ENCODE measurements at regions of chr19 and their contacts with region 1.

Region 1: DNA sequence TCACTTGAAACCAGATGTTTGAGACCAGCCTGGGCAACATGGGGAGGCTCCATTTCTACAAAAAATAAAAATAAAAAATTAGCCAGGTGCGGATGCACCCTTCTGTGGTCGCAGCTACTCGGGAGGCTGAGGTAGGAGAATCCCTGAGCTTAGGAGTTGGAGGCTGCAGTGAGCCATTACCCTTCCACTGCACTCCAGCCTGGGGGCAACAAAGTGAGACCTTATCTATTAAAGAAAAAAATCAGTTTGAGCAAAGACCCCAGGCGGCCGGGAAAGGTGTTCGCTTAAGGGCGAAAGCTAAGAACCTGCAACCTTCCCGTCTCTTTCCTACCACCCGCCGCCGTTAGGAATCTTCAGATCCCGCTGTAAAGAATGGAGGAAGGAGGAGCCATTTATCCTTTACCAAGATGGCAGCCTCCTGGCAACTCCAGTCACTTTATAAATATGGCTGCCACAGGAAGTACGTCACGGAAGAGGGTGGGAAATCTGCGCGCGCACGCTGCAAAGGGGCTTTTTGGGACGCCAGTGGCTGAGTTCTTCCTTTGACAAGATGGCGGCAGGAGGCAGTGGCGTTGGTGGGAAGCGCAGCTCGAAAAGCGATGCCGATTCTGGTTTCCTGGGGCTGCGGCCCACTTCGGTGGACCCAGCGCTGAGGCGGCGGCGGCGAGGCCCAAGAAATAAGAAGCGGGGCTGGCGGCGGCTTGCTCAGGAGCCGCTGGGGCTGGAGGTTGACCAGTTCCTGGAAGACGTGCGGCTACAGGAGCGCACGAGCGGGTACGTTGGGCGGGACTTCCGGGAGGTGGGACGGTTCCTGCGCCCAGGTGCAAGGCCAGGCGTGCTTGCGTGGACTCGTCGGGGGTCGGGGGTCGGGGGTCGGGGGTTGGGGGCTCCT is at the start of gene NOP53:
- DNase-seq: peak; percentile 98
- ATAC-seq: peak; percentile 71
- H3K4me3 Mint-ChIP-seq: peak within 1 kb of the TSS; percentile 98
- H3K27ac Mint-ChIP-seq: peak within 1 kb of the TSS; percentile 99
- H3K4me1 Mint-ChIP-seq: peaks cover 44% of the 10 kb centered on the region
- H3K27me3 Mint-ChIP-seq: no peaks in the 10 kb centered on the region
- total RNA-seq, gene NOP53: 317 to 374 TPM

Region 2: GRCh38 chr19:47436712-47437401 is 308.4 kb before region 1 on chr19:
- CTCF ChIA-PET with region 1: no interaction called
- POLR2A ChIA-PET with region 1: no interaction called
- intact Hi-C with region 1: loop called in 1 of 2 experiments (anchors 1 kb)
- DNase-seq: peak; percentile 92
- ATAC-seq: peak; percentile 91
- H3K4me3 Mint-ChIP-seq: no peak overlapping the region
- H3K27ac Mint-ChIP-seq: no peak overlapping the region
- H3K4me1 Mint-ChIP-seq: peaks cover 17% of the 10 kb centered on the region
- H3K27me3 Mint-ChIP-seq: peaks cover 38% of the 10 kb centered on the region

Region 3: DNA sequence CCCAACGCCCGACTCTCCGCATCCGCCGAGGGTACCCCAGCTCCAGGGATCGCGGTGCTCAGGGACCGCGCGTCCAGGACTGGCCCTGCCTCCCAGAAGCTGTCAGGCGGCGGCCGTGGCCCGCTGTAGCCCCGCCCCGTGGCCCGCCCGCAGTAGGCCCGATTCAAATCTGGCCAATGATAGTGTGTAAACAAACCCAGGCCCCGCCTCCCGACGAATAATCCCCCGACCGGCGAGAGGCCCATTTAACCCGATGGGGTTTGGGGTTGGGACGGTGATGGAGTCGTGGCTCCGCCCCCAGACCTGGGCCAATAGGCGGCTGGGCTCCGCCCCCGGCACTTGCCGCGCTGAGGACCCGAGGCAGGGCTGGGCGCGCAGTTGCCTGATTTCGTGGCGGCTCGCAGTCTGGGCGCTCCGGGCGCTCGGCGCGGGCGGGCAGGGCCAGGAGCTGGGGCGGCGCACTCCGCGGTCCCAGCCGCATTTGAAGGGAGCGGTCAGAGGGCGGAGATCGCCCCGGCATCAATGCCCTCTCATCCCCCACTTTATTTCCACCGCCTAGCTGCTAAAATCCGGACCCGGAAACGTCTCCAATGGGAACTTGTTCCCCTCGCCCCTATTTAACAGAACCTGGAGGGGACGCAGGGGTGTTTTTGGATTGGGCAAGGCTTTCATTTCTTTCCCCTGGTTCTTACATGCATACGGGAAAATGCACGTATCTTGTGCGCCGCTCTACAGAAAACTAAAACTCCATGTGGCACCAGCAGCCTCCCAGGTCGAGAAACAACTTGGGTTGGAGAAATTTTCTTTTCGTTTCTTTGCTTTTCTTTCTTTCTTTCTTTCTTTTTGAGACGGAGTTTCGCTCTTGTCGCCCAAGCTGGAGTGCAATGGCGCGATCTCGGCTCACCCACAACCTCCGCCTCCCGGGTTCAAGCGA is 144.7 kb before region 1 on chr19:
- CTCF ChIA-PET with region 1: no interaction called
- POLR2A ChIA-PET with region 1: no interaction called
- intact Hi-C with region 1: loop called in 1 of 2 experiments (anchors 1 kb)
- DNase-seq: peak; percentile 100
- ATAC-seq: peak; percentile 98
- H3K4me3 Mint-ChIP-seq: peak overlapping the region; percentile 79
- H3K27ac Mint-ChIP-seq: peak overlapping the region; percentile 89
- H3K4me1 Mint-ChIP-seq: peaks cover 31% of the 10 kb centered on the region
- H3K27me3 Mint-ChIP-seq: no peaks in the 10 kb centered on the region

Region 4: GRCh38 chr19:47697863-47698609 is 47.2 kb before region 1 on chr19:
- CTCF ChIA-PET with region 1: interaction called, 3 read pairs
- POLR2A ChIA-PET with region 1: interaction called, 3 read pairs
- intact Hi-C with region 1: loop called in 1 of 2 experiments (anchors 1 kb)
- DNase-seq: peak; percentile 80
- ATAC-seq: peak; percentile 88
- H3K4me3 Mint-ChIP-seq: no peak overlapping the region
- H3K27ac Mint-ChIP-seq: peak overlapping the region; percentile 37
- H3K4me1 Mint-ChIP-seq: no peaks in the 10 kb centered on the region
- H3K27me3 Mint-ChIP-seq: no peaks in the 10 kb centered on the region

Region 5: GRCh38 chr19:47713046-47714021 is 31.9 kb before region 1 on chr19 and contains the start of gene EHD2:
- CTCF ChIA-PET with region 1: interaction called, 52 read pairs
- POLR2A ChIA-PET with region 1: no interaction called
- intact Hi-C with region 1: loop called (anchors 1 kb)
- DNase-seq: peak; percentile 76
- ATAC-seq: peak; percentile 78
- H3K4me3 Mint-ChIP-seq: peak within 1 kb of the TSS; percentile 53
- H3K27ac Mint-ChIP-seq: no peak within 1 kb of the TSS
- H3K4me1 Mint-ChIP-seq: peaks cover 5% of the 10 kb centered on the region
- H3K27me3 Mint-ChIP-seq: peaks cover 37% of the 10 kb centered on the region
- total RNA-seq, gene EHD2: 1.6 to 2.5 TPM

Region 6: GRCh38 chr19:47729992-47730889 is 15.0 kb before region 1 on chr19:
- CTCF ChIA-PET with region 1: no interaction called
- POLR2A ChIA-PET with region 1: no interaction called
- intact Hi-C with region 1: loop called in 1 of 2 experiments (anchors 1 kb)
- DNase-seq: peak; percentile 83
- ATAC-seq: peak; percentile 93
- H3K4me3 Mint-ChIP-seq: peak overlapping the region; percentile 78
- H3K27ac Mint-ChIP-seq: peak overlapping the region; percentile 75
- H3K4me1 Mint-ChIP-seq: peaks cover 22% of the 10 kb centered on the region
- H3K27me3 Mint-ChIP-seq: peaks cover 18% of the 10 kb centered on the region

Measured in activated CD4-positive, alpha-beta T cell treated with anti-CD3 and anti-CD28 coated beads for 36 hours (primary cell).